ENCODE measurements at regions of chr17 and their contacts with region 1.

Region 1: GRCh38 chr17:40531051-40531991 is 29.9 kb upstream of the TNS4 start:
- DNase-seq: no peak
- ATAC-seq: no peak
- H3K4me3 Mint-ChIP-seq: no peak overlapping the region
- H3K27ac Mint-ChIP-seq: peak overlapping the region; percentile 92
- H3K4me1 Mint-ChIP-seq: peaks cover 91% of the 10 kb centered on the region
- H3K27me3 Mint-ChIP-seq: no peaks in the 10 kb centered on the region

Region 2: GRCh38 chr17:40209404-40210093 is 321.8 kb before region 1 on chr17:
- CTCF ChIA-PET with region 1: no interaction called
- POLR2A ChIA-PET with region 1: no interaction called
- DNase-seq: no peak
- ATAC-seq: no peak
- H3K4me3 Mint-ChIP-seq: no peak overlapping the region
- H3K27ac Mint-ChIP-seq: no peak overlapping the region
- H3K4me1 Mint-ChIP-seq: no peaks in the 10 kb centered on the region
- H3K27me3 Mint-ChIP-seq: peaks cover 2% of the 10 kb centered on the region

Region 3: DNA sequence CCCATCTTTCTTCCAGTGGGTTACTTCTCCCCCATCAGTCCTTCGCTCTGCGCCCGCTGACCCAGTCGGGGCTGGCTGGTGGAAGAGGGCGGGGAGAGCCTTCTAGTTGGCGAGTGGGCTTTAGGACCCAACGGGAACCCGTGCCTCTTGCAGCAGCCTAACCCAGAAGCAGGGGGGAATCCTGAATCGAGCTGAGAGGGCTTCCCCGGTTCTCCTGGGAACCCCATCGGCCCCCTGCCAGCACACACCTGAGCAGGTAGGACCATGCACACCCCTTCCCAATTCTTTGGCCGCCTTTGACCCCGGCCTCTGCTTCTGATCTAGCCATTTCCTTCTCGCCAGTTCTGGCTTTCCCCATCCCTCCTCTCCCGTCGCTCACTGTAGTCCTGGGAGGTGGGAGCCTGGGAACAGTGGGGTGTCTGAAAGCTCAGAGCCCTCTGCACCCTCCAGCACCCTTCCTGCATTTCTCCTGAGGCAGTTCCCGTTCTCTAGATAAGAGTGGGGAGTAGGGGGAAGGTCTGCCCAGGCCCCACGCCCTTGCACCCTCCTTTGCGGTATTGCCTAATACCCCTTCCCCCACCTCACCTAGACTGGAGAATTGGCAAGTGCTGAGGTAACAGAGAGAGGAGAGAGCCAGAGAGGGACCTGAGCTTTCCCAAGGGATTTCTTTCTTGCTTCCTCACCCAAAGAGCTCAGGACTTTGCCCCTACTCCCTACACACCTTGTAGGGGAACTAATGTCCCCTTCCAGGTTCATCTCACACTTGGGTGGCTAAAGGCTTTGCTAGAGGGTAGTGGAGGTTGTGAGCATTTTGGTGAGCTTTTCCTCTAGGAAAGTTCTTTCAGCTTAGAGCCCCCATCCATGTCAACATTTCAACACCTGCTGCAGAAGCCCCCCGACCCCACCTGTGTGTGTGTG is 222.0 kb before region 1 on chr17 and contains the start of gene RARA:
- CTCF ChIA-PET with region 1: interaction called, 12 read pairs
- POLR2A ChIA-PET with region 1: no interaction called
- DNase-seq: no peak
- ATAC-seq: peak; percentile 24
- H3K4me3 Mint-ChIP-seq: no peak within 1 kb of the TSS
- H3K27ac Mint-ChIP-seq: peak within 1 kb of the TSS; percentile 30
- H3K4me1 Mint-ChIP-seq: peaks cover 5% of the 10 kb centered on the region
- H3K27me3 Mint-ChIP-seq: no peaks in the 10 kb centered on the region
- total RNA-seq, gene RARA: 61.1 to 63.2 TPM

Region 4: DNA sequence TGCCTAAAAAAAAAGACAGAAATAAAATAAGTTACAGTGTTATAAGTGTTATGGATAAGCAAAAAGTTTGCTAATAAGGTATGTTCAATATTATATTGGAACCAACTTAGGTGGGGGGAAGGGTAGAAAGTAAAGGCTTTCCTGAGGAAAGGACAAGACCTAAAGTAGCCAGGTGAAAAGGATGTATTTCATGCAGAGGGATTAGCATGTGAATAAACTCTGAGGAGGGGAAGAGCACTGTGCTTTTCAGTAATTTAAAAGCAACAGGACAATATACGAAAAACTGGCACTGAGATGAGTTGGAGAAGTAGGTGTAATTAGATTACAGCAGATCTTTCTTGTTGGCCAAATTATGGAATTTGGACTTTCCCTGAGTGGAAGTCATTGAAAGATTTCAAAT is 121.2 kb before region 1 on chr17:
- CTCF ChIA-PET with region 1: interaction called, 122 read pairs
- POLR2A ChIA-PET with region 1: interaction called, 67 read pairs
- DNase-seq: no peak
- ATAC-seq: no peak
- H3K4me3 Mint-ChIP-seq: no peak overlapping the region
- H3K27ac Mint-ChIP-seq: peak overlapping the region; percentile 27
- H3K4me1 Mint-ChIP-seq: peaks cover 41% of the 10 kb centered on the region
- H3K27me3 Mint-ChIP-seq: no peaks in the 10 kb centered on the region

Region 5: GRCh38 chr17:40433551-40434415 is 97.5 kb before region 1 on chr17:
- CTCF ChIA-PET with region 1: interaction called, 35 read pairs
- POLR2A ChIA-PET with region 1: interaction called, 3 read pairs
- DNase-seq: peak; percentile 54
- ATAC-seq: peak; percentile 77
- H3K4me3 Mint-ChIP-seq: no peak overlapping the region
- H3K27ac Mint-ChIP-seq: no peak overlapping the region
- H3K4me1 Mint-ChIP-seq: peaks cover 20% of the 10 kb centered on the region
- H3K27me3 Mint-ChIP-seq: peaks cover 8% of the 10 kb centered on the region

Region 6: DNA sequence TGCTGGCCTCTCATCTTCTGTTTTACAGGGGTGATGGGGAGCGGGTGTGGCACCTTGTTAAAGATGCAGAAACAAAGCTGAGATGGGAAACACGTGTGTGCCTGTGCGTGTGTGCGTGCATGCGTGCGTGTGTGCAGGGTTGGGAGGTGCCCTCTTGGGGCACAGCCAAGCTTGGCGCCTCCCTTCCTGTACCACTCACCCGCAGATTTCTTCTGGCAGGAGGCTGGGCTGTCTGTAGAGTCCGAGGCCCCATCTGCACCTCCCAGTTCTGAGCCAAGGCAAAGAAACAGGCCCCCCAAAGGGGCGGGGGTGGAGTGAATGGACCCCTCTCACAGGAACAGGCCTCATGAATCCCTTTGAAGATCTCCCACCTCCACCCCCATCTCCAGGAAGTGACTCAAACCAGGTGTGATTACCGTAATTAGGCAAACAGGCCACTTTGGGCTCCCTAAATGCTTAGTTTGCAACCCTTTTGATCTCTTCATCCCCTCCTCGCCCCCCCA is 50.8 kb before region 1 on chr17:
- CTCF ChIA-PET with region 1: interaction called, 82 read pairs
- POLR2A ChIA-PET with region 1: interaction called, 32 read pairs
- DNase-seq: peak; percentile 91
- ATAC-seq: peak; percentile 91
- H3K4me3 Mint-ChIP-seq: peak overlapping the region; percentile 70
- H3K27ac Mint-ChIP-seq: peak overlapping the region; percentile 98
- H3K4me1 Mint-ChIP-seq: peaks cover 87% of the 10 kb centered on the region
- H3K27me3 Mint-ChIP-seq: no peaks in the 10 kb centered on the region

Region 7: DNA sequence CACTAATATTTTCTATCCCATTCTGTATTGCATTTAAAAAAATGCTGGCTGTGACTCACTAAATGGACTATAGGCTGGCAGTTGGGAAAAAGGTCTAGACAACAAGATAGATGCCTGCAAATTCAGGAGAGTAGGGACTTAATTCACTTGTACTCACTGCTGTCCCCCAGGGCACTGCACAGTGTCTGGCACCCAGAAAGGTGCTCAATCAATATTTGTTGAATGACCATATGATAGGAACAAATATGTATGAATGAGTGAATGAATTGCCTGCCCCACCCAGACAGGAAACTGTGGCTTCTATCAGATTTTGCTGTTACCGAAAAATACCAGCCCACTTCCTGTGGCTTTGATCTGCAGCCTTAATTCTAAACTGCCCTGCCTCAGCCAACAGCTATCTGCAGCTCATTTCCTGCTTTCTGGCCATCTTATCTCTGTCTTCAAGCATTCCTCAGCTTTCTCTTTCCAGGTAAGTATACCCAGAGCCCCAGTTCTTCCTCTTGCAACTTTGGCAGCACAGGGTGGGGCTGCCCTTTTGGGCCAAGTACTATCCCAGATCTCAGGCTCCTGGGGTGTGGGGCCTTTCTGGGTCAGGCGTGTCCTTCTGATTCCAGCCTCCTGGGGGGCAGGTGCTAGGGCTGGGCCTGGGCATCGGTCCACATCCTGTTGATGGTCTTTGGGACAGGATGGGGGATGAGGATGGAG is 14.6 kb before region 1 on chr17:
- CTCF ChIA-PET with region 1: interaction called, 61 read pairs
- POLR2A ChIA-PET with region 1: interaction called, 58 read pairs
- DNase-seq: peak; percentile 92
- ATAC-seq: peak; percentile 84
- H3K4me3 Mint-ChIP-seq: peak overlapping the region; percentile 70
- H3K27ac Mint-ChIP-seq: peak overlapping the region; percentile 84
- H3K4me1 Mint-ChIP-seq: peaks cover 71% of the 10 kb centered on the region
- H3K27me3 Mint-ChIP-seq: no peaks in the 10 kb centered on the region

Measured in activated CD8-positive, alpha-beta T cell treated with anti-CD3 and anti-CD28 coated beads, Interleukin-2, amount 10 ng/mL, durations not matched to agents 7 days and 5 days (primary cell).